ENCODE measurements at regions of chr11 and their contacts with region 1.

Region 1: DNA sequence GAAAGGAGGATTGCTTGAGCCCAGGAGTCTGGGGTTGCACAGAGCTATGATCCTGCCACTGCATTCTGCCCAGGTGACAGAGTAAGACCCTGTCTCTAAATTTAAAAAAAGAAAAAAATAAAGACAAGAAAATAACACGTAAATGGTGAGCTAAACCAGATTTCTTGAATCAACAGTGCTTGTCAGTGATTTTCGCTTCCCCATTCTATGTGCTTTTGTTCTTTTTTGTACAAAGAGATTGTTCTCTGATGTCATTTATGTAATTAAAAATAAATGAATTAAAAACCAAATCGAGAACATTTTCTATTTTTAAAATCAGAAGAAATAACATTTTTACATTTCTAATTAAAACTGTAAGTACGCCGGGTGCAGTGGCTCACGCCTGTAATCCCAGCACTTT is 19.8 kb upstream of the SLC29A2 start:
- DNase-seq: no peak
- H3K4me3 ChIP-seq: no peak overlapping the region
- H3K27ac ChIP-seq: no peak overlapping the region
- H3K4me1 ChIP-seq: no peaks in the 10 kb centered on the region
- H3K27me3 ChIP-seq: peaks cover 0 to 3% of the 10 kb centered on the region in 2 donors
- CTCF ChIP-seq: no peak
- POLR2A ChIP-seq: no peak

Region 2: DNA sequence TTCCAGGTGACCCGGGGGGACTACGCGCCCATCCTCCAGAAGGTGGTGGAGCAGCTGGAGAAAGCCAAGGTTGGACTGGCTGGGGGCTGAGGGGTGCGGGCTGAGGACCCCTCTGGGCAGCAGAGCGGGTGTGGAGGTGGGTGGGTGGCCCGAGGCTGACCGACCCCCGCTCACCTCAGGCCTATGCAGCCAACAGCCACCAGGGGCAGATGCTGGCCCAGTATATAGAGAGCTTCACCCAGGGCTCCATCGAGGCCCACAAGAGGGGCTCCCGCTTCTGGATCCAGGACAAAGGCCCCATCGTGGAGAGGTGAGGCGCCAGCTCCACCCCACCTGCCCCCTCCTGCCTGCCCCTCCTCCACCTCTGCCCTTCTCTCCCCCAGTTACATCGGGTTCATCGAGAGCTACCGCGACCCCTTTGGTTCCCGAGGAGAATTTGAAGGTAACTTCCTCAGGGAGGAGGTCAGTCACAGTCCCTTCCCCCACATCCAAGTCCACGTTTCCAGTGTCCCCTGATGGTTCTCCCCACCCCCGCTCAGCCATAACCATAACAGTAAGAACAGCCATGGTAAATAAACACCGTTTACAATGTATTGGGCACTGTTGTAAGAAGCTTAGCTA is 100.1 kb after region 1 on chr11:
- intact Hi-C with region 1: loop called (anchors 5 kb)
- DNase-seq: no peak
- H3K4me3 ChIP-seq: no peak overlapping the region
- H3K27ac ChIP-seq: no peak overlapping the region
- H3K4me1 ChIP-seq: no peaks in the 10 kb centered on the region
- H3K27me3 ChIP-seq: no peaks in the 10 kb centered on the region
- CTCF ChIP-seq: no peak
- POLR2A ChIP-seq: no peak